Activated CD4-positive, alpha-beta T cell treated with anti-CD3 and anti-CD28 coated beads for 36 hours (primary cell): ENCODE measurements at regions of chrX and their contacts with region 1.

Region 1: GRCh38 chrX:130079824-130080406 is 30.4 kb downstream of the ELF4 start:
- DNase-seq: peak; percentile 72
- ATAC-seq: no peak
- H3K4me3 Mint-ChIP-seq: no peak overlapping the region
- H3K27ac Mint-ChIP-seq: peak overlapping the region; percentile 26
- H3K4me1 Mint-ChIP-seq: peaks cover 45% of the 10 kb centered on the region
- H3K27me3 Mint-ChIP-seq: no peaks in the 10 kb centered on the region

Region 2: GRCh38 chrX:130091958-130092522 is 12.1 kb after region 1 on chrX:
- CTCF ChIA-PET with region 1: interaction called, 3 read pairs
- POLR2A ChIA-PET with region 1: no interaction called
- intact Hi-C with region 1: loop called (anchors 1 kb)
- DNase-seq: peak; percentile 93
- ATAC-seq: peak; percentile 98
- H3K4me3 Mint-ChIP-seq: peak overlapping the region; percentile 78
- H3K27ac Mint-ChIP-seq: peak overlapping the region; percentile 97
- H3K4me1 Mint-ChIP-seq: peaks cover 63% of the 10 kb centered on the region
- H3K27me3 Mint-ChIP-seq: no peaks in the 10 kb centered on the region

Region 3: GRCh38 chrX:130120746-130121504 is 41.0 kb after region 1 on chrX:
- CTCF ChIA-PET with region 1: interaction called, 67 read pairs
- POLR2A ChIA-PET with region 1: interaction called, 5 read pairs
- intact Hi-C with region 1: loop called (anchors 1 to 2 kb)
- DNase-seq: peak; percentile 81
- ATAC-seq: peak; percentile 88
- H3K4me3 Mint-ChIP-seq: peak overlapping the region; percentile 57
- H3K27ac Mint-ChIP-seq: peak overlapping the region; percentile 60
- H3K4me1 Mint-ChIP-seq: peaks cover 19% of the 10 kb centered on the region
- H3K27me3 Mint-ChIP-seq: no peaks in the 10 kb centered on the region

Region 4: DNA sequence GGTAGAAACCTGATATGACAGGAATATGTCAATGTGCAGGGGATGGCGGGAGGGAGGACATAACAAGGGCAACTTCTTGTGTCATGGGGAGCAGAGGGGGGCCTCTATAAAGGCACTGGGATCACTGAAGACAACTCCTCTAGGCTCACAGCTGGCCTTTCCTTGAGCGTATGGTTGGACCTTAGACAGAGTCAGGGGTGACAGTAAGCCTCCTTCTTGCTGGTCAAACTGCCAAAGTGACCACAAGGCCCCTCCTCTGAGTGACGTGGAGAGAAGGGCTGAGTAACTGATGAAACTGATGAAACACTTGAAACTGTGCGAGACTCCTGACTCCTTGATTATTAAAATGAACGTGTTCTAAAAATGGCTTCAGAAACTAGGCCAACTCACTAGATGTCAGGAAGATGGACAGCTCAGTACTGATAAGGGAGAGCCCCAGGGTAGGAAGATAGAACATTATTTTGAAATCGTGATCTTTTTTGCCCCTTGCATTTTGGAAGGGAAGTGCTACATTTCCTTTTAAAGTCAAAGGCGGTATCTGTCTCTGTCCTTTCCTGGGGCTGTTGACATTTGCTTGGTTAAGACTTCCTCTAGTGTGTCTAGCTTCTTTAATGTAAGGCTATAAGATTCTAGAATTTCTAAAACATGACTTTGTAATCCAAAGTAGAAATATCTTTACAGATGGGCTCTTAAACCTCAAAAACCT is 93.4 kb after region 1 on chrX:
- CTCF ChIA-PET with region 1: interaction called, 5 read pairs
- POLR2A ChIA-PET with region 1: no interaction called
- intact Hi-C with region 1: loop called (anchors 2 to 5 kb)
- DNase-seq: peak; percentile 68
- ATAC-seq: peak; percentile 59
- H3K4me3 Mint-ChIP-seq: peak overlapping the region; percentile 88
- H3K27ac Mint-ChIP-seq: peak overlapping the region; percentile 92
- H3K4me1 Mint-ChIP-seq: peaks cover 48% of the 10 kb centered on the region
- H3K27me3 Mint-ChIP-seq: no peaks in the 10 kb centered on the region

Region 5: GRCh38 chrX:130196466-130196865 is 116.6 kb after region 1 on chrX:
- CTCF ChIA-PET with region 1: interaction called, 15 read pairs
- POLR2A ChIA-PET with region 1: no interaction called
- intact Hi-C with region 1: loop called (anchors 1 kb)
- DNase-seq: no peak
- ATAC-seq: no peak
- H3K4me3 Mint-ChIP-seq: no peak overlapping the region
- H3K27ac Mint-ChIP-seq: no peak overlapping the region
- H3K4me1 Mint-ChIP-seq: no peaks in the 10 kb centered on the region
- H3K27me3 Mint-ChIP-seq: no peaks in the 10 kb centered on the region